ENCODE measurements at regions of chr1 and their contacts with region 1.

Region 1: DNA sequence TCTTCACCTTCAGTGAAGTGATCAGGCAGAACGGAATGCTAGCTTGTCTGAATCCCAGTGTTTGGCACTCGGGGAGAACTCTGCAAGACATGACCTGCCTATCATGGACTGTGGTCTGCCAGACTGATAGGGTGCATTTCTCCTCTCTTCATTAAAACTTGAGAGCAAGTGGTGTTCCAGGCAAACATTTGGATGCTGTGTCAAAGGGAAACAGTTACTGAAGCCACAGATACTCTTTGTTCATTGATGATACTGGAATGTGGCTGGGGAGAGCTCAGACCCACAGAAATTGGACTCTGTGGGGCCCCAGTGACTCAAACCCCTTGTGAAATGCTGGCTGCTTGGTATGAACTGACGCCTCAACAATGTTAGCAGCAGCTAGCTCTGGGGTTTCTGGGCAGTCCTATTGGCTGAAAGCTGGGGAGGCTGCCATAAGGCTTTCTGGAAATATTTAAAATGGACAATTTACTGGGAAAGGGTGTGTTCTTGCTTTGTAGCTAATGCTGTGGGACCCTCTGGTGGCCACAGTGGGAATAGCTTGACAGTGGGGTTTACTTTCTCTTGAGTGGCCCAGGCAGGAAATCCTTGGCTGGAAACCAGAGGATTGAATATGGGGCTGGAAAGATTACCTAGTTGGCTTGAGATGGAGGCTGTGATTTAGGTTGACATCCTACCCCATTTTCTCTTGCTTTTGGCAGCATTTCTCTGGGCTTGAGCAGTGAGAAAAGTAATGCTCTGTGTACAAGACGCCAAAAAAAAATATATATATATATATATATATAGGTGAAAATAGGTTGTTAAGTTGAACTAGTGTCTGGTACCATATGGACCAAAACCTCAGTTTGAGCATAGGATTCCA is 8.0 kb upstream of the S100A10 start:
- DNase-seq: peak; percentile 80
- H3K27ac ChIP-seq: peak overlapping the region; percentile 93
- CTCF ChIP-seq: peak; percentile 89

Region 2: DNA sequence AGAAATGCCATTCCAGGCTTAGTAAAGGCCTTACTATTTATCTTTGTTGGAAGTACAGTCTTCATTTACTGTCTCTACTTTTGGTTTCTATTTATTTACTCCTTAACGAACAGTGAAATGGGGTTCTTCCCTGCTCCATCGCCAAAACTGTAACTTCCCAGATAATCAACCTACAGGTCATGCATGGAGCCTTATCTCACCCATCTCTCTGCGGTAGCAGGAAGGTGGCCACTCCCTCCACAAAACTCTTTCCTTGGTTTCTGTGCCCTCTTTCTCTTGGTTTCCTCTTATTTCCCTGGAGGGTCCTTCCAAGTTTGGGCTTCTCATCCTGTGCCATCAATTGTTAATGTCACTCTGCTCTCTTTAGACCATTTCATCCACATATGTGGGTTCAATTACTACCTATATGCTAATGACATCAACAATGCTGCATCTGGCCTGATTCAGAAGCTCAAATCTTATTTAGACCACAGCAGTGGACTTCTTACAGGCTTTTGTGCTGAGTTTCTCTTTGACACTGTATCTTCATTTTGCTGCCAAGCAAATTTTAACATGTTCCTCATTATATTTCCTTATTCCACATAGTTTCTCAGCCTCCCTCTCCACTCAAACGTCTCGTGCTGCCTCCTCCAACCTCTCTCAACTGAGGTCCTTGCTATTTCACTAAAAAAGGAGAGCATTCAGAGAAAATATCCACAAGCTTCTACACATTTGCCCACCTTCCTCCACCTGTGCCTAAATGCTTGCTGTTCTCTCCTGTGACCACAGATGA is 218.0 kb before region 1 on chr1:
- CTCF ChIA-PET with region 1: no interaction called
- POLR2A ChIA-PET with region 1: no interaction called
- DNase-seq: no peak
- H3K27ac ChIP-seq: no peak overlapping the region
- CTCF ChIP-seq: no peak

Region 3: DNA sequence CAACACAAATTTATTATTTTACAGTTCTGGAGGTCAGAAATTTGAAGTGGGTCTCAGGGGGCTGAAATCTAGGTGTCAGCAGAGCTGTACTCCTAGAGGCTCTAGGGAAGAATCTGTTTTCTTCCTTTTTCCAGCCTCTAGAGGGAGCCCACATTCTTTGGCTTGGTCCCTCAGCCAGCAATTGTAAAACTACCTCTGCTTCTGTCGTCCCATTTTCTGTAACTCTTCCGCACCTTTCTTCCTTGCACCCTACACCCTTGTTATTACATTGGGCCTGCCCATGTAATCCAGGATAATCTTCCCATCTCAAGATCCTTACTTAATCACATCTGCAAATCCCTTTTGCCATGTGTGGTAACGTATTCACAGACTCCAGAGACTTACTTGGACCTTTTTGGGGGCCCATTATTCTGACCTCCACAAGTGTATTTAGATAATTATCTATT is 67.5 kb before region 1 on chr1:
- CTCF ChIA-PET with region 1: interaction called, 16 read pairs
- POLR2A ChIA-PET with region 1: no interaction called
- DNase-seq: peak; percentile 57
- H3K27ac ChIP-seq: no peak overlapping the region
- CTCF ChIP-seq: peak; percentile 91

Region 4: DNA sequence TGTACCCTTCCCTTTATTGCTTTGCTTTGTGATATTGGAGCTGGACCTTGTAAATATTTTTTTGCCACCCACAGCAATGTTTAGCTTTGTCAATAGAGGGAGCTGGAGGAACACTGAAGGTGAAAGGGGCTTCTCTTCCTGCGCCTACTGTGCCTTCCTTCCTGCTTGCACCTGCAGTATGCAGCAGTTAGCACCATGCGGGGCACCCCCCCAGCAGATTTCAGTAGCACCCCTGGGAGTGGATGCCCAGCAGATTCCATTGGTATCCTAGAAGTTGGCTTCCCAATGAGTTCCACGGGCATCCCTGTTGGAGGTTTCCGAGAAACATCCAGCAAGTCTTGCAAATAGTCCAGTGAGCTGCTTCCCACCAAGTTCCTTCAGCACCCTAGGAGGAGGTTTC is 33.6 kb before region 1 on chr1:
- CTCF ChIA-PET with region 1: interaction called, 28 read pairs
- POLR2A ChIA-PET with region 1: no interaction called
- DNase-seq: no peak
- H3K27ac ChIP-seq: no peak overlapping the region
- CTCF ChIP-seq: peak; percentile 41; the same call in 1 of the 2 replicates

Region 5: DNA sequence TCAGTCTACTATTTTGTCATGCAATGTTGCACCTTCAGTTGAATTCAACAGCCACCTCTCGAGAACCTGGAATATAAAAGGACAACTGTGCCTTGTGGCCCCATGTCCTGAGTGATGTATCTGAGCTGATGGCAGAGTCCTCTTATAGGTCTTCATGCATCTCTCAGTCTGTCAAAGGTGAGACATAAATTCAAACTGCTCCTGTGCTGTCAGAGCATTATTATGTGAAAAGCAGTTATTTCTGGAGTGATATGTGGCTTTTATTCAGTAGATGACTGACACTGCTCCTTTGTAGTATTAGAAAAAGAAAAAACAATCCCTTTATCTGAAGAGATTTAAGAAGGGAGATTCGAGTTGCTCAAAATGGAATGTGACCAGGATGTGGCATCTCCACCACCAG is 16.4 kb before region 1 on chr1:
- CTCF ChIA-PET with region 1: interaction called, 3 read pairs
- POLR2A ChIA-PET with region 1: interaction called, 11 read pairs
- DNase-seq: no peak
- H3K27ac ChIP-seq: no peak overlapping the region
- CTCF ChIP-seq: no peak

Region 6: DNA sequence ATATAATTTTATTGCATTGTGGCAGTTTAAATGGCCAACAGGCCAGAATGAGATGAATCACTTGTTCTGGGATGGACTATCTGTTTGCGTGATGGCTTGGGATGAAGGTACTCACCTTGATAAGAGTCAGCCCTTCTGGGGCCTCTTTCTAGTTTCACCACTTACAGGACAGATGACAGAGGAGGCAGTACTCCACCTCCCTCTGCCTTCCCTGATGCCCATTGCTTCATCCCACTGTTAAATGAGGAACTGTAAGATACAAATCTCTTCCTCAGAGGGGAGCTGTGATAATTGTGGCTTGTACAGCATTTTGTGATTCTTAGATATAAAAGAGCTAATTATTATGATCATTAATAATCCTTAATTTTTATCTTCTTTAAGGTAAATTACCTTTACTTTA is 117.3 kb after region 1 on chr1:
- CTCF ChIA-PET with region 1: no interaction called
- POLR2A ChIA-PET with region 1: no interaction called
- DNase-seq: no peak
- H3K27ac ChIP-seq: no peak overlapping the region
- CTCF ChIP-seq: no peak

Measured in RWPE1 (cell line).